Activated CD4-positive, alpha-beta memory T cell treated with anti-CD3 and anti-CD28 coated beads for 36 hours (primary cell): ENCODE measurements at regions of chr12 and their contacts with region 1.

Region 1: DNA sequence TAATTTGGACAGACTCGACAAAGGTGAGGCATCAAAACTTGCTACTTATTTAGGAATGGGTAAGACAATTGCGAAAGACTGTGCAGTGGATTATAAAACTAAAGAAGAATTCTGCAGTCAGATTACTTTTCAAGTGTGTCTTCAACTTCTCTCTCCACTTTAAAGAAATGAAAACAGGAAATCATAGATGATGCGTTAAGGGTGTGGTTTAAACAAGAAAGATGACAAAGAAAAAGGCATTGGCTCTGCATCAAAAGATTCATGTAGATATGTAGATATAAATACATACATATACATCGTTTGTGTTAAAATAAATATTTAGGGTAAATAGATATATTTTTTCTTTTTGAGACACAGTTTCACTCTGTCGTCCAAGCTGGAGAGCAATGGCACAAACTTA is 74.6 kb upstream of the PARP11 start:
- DNase-seq: no peak
- H3K4me3 Mint-ChIP-seq: no peak overlapping the region
- H3K27ac Mint-ChIP-seq: peak overlapping the region; percentile 82
- H3K4me1 Mint-ChIP-seq: peaks cover 58% of the 10 kb centered on the region
- H3K27me3 Mint-ChIP-seq: no peaks in the 10 kb centered on the region

Region 2: GRCh38 chr12:3680896-3681594 is 266.7 kb before region 1 on chr12:
- CTCF ChIA-PET with region 1: no interaction called
- POLR2A ChIA-PET with region 1: no interaction called
- intact Hi-C with region 1: no loop called
- DNase-seq: no peak
- H3K4me3 Mint-ChIP-seq: no peak overlapping the region
- H3K27ac Mint-ChIP-seq: no peak overlapping the region
- H3K4me1 Mint-ChIP-seq: no peaks in the 10 kb centered on the region
- H3K27me3 Mint-ChIP-seq: no peaks in the 10 kb centered on the region

Region 3: DNA sequence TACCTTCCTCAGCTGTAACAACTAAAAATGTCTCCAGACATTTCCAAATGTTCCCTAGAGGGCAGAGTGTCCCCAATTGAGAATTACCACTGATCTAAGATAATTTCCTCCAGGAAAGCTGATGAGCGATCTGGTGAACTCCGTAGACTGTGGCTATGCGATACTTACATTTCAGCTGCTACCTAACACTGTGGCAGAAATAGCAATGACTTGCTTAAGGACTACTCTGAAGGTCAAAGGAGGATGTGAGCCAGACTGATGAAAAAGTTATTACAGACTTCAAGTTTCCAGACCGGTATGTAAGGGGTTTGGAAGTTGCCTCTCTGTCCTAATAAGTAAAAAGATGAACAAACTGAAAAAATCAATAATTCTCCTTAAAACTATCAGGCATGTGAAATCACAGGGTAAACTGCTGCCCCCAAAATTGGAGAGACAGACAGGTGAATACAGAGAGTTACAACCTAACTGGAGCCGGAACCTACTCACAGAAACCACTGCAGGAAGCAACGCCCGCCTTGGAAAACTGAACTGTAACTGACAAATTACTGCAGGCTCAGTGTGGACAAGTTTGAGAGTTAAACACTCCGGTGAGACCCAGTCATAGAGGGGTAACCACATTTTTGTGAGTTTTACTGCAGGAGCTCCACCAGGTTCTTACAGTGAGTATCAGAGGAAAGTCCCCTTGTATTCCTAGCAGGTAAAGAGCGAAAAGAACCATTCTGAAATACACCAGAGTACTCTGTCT is 14.5 kb before region 1 on chr12:
- CTCF ChIA-PET with region 1: no interaction called
- POLR2A ChIA-PET with region 1: no interaction called
- intact Hi-C with region 1: loop called (anchors 1 kb)
- DNase-seq: peak; percentile 40
- H3K4me3 Mint-ChIP-seq: peak overlapping the region; percentile 41
- H3K27ac Mint-ChIP-seq: peak overlapping the region; percentile 38
- H3K4me1 Mint-ChIP-seq: peaks cover 47% of the 10 kb centered on the region
- H3K27me3 Mint-ChIP-seq: no peaks in the 10 kb centered on the region

Region 4: DNA sequence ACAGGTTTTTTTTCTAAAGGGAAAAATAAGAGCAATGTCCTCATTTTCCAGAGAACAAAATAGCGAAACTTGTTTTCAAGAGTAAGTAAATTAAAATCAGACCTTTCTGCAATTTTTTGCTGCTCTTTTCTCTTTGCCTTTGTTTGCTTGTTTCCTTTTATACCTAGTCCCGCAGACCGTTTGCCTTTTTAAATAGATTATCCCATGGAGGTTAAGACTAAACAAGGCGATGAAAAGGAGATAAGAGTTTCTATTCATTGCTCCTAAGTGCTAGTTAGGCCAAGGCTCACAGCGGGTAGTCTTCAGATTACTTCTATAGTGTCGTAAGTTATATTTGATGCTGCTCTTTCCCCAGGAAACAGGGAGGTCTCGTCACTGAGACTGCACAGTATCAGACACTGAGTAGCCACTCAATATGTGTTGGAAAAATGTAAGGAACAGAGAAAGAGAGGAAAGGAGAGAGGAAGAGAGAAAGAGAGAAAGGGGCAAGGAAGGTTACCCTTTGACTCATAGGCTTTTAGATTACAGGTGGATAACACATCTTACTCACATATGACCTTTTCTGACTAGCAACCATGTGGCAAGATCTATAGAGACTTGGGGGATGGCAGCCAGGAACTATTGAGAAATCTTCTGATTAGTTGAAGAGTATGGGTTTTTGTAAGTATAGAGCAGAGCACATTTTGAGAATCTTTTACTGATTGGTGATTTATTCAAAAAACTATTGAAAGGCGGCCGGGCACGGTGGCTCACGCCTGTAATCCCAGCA is 32.9 kb after region 1 on chr12:
- CTCF ChIA-PET with region 1: no interaction called
- POLR2A ChIA-PET with region 1: no interaction called
- intact Hi-C with region 1: loop called (anchors 5 kb)
- DNase-seq: no peak
- H3K4me3 Mint-ChIP-seq: no peak overlapping the region
- H3K27ac Mint-ChIP-seq: peak overlapping the region; percentile 9
- H3K4me1 Mint-ChIP-seq: peaks cover 27% of the 10 kb centered on the region
- H3K27me3 Mint-ChIP-seq: no peaks in the 10 kb centered on the region